ENCODE measurements at regions of chr1 and their contacts with region 1.

Region 1: DNA sequence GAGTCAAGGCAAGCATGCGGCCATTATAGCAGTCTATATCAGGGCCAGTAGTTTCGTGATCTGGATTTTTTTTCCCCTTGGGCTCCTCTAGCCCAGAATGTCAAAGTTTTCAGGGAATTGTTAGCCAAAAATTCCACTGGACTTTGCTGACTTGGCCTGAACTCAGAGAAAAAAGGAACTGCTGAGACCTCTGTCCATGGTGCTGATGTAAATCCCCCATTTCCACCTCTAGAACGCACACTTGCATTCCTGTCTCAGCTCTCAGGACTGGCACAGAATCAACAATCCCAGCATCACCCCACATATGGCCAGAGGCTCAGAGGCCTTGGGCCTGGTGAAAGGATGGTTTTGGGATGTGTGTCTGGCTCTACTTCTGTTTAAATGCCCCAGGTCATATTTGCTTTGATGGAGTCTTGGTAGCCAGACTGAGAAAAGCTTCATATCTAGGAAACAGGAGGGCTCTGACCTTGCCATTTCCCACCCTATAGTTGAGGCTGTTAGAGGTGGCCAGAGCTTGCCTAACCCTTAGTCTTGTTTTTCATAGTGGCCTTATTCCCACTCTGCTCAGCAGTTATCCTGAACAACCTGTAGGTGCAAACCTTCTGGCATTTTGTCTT is 16.9 kb upstream of the EFCAB14 start:
- DNase-seq: no peak
- H3K4me3 ChIP-seq: no peak overlapping the region
- H3K27ac ChIP-seq: no peak overlapping the region
- H3K4me1 ChIP-seq: no peaks in the 10 kb centered on the region
- H3K27me3 ChIP-seq: no peaks in the 10 kb centered on the region
- CTCF ChIP-seq: peak; percentile 61 to 74 (median 63)

Region 2: GRCh38 chr1:46983830-46984586 is 248.2 kb after region 1 on chr1:
- dilution Hi-C with region 1: loop called (anchors 5 kb)
- DNase-seq: no peak
- H3K4me3 ChIP-seq: no peak overlapping the region
- H3K27ac ChIP-seq: no peak overlapping the region
- H3K4me1 ChIP-seq: no peaks in the 10 kb centered on the region
- H3K27me3 ChIP-seq: peaks cover 2% of the 10 kb centered on the region
- CTCF ChIP-seq: no peak

Measured in keratinocyte (primary cell).